Activated CD4-positive, alpha-beta memory T cell treated with anti-CD3 and anti-CD28 coated beads for 36 hours (primary cell): ENCODE measurements at regions of chr4 and their contacts with region 1.

Region 1: GRCh38 chr4:147096667-147097604 is 151.3 kb upstream of the TTC29 start:
- DNase-seq: no peak
- H3K4me3 Mint-ChIP-seq: no peak overlapping the region
- H3K27ac Mint-ChIP-seq: no peak overlapping the region
- H3K4me1 Mint-ChIP-seq: no peaks in the 10 kb centered on the region
- H3K27me3 Mint-ChIP-seq: peaks cover 12% of the 10 kb centered on the region

Region 2: DNA sequence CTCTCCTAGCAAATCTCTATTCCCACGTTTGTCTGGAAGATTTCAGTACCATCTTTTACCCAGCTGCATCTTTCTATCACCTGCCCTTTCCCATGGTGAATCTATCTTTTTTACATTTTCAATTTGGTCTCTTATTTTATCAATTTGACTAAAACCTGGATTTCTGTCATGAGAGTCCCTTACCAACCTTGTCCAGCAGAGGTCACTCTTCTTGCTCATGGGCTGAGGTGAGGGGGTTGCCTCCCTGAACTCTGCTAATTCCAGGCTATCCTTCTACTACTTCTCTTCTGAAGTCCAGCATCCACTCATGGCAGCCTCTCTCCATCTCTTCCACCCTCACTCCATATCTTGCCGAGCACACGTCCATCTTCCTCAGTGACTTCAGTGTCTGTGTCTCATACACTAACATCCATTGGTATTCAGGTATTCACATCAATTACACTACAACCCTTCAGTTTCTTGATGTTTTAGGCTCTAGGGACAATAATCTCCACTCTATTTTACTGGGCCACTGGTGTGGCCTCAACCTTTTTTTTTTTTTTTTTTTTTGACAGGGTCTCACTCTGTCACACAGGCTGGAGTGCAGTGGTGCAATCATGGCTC is 1140.5 kb before region 1 on chr4:
- CTCF ChIA-PET with region 1: no interaction called
- POLR2A ChIA-PET with region 1: no interaction called
- intact Hi-C with region 1: loop called (anchors 10 kb)
- DNase-seq: peak; percentile 17
- H3K4me3 Mint-ChIP-seq: no peak overlapping the region
- H3K27ac Mint-ChIP-seq: no peak overlapping the region
- H3K4me1 Mint-ChIP-seq: peaks cover 4% of the 10 kb centered on the region
- H3K27me3 Mint-ChIP-seq: peaks cover 9% of the 10 kb centered on the region

Region 3: DNA sequence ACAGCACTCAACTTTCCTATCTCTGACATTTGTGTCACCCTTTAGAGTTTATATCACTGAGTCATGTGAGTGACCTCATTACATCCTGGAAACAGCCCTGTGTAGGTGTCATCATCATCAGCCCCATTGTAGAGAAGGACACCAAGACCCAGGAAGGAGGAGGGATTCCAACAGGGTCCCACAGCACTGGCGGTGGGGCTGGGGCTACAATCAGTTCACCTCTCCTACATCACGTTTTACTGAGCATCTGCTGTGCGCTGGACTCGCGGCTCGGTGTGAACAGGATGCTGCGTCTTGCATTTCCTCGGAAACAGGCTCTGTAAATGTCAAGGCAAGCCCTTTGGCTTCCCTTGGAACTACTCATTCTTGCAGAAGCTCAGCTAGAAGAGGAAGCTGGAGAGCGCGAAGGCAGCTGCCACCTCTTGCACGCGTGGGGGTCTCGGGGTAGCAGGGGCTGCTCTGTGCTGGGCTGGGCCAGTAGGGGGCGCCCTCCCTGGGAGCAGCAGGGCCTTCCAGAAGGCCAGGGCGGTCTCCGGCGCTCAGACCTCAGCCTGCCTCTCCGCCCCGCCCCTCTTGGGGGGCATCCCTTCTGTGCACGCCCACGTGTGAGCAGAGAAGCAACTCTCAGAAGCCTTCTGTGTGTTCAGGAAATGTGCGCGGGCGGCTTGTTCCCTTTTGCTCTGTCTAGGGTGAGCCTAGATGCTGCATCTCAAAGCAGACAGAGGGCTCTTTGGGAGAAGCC is 853.6 kb before region 1 on chr4:
- CTCF ChIA-PET with region 1: interaction called, 6 read pairs
- POLR2A ChIA-PET with region 1: no interaction called
- intact Hi-C with region 1: loop called (anchors 1 kb)
- DNase-seq: peak; percentile 83
- H3K4me3 Mint-ChIP-seq: peak overlapping the region; percentile 65
- H3K27ac Mint-ChIP-seq: peak overlapping the region; percentile 80
- H3K4me1 Mint-ChIP-seq: peaks cover 36% of the 10 kb centered on the region
- H3K27me3 Mint-ChIP-seq: peaks cover 2% of the 10 kb centered on the region

Region 4: GRCh38 chr4:146969126-146969525 is 127.8 kb before region 1 on chr4:
- CTCF ChIA-PET with region 1: no interaction called
- POLR2A ChIA-PET with region 1: no interaction called
- intact Hi-C with region 1: no loop called
- DNase-seq: no peak
- H3K4me3 Mint-ChIP-seq: no peak overlapping the region
- H3K27ac Mint-ChIP-seq: no peak overlapping the region
- H3K4me1 Mint-ChIP-seq: no peaks in the 10 kb centered on the region
- H3K27me3 Mint-ChIP-seq: peaks cover 20% of the 10 kb centered on the region

Region 5: GRCh38 chr4:147019061-147019460 is 77.9 kb before region 1 on chr4:
- CTCF ChIA-PET with region 1: interaction called, 159 read pairs
- POLR2A ChIA-PET with region 1: no interaction called
- intact Hi-C with region 1: loop called (anchors 1 kb)
- DNase-seq: peak; percentile 66
- H3K4me3 Mint-ChIP-seq: no peak overlapping the region
- H3K27ac Mint-ChIP-seq: no peak overlapping the region
- H3K4me1 Mint-ChIP-seq: no peaks in the 10 kb centered on the region
- H3K27me3 Mint-ChIP-seq: no peaks in the 10 kb centered on the region

Region 6: GRCh38 chr4:147039976-147040575 is 56.9 kb before region 1 on chr4:
- CTCF ChIA-PET with region 1: interaction called, 12 read pairs
- POLR2A ChIA-PET with region 1: no interaction called
- intact Hi-C with region 1: no loop called
- DNase-seq: no peak
- H3K4me3 Mint-ChIP-seq: no peak overlapping the region
- H3K27ac Mint-ChIP-seq: no peak overlapping the region
- H3K4me1 Mint-ChIP-seq: no peaks in the 10 kb centered on the region
- H3K27me3 Mint-ChIP-seq: peaks cover 8% of the 10 kb centered on the region

Region 7: DNA sequence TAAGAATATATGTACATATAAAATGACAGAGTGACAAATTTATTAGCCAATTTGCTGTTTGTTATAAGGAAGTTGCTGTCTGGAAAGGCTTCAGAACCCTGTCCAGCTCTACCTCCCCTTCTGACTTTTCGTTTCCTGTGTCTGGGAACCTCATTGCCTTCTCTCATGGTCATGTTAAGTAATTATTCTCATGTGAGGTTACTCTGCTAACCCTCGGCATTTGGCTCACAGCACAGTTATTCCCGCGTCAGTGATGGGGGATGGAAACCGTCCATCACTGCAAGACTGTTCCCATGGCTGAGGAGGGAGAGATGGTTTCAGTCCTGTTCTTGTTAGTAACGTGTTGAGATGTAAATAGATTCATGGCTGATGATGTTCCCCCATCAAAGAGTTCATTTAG is 395.8 kb after region 1 on chr4:
- CTCF ChIA-PET with region 1: no interaction called
- POLR2A ChIA-PET with region 1: no interaction called
- intact Hi-C with region 1: no loop called
- DNase-seq: no peak
- H3K4me3 Mint-ChIP-seq: no peak overlapping the region
- H3K27ac Mint-ChIP-seq: no peak overlapping the region
- H3K4me1 Mint-ChIP-seq: no peaks in the 10 kb centered on the region
- H3K27me3 Mint-ChIP-seq: peaks cover 7% of the 10 kb centered on the region